ENCODE measurements at regions of chr20 and their contacts with region 1.

Region 1: DNA sequence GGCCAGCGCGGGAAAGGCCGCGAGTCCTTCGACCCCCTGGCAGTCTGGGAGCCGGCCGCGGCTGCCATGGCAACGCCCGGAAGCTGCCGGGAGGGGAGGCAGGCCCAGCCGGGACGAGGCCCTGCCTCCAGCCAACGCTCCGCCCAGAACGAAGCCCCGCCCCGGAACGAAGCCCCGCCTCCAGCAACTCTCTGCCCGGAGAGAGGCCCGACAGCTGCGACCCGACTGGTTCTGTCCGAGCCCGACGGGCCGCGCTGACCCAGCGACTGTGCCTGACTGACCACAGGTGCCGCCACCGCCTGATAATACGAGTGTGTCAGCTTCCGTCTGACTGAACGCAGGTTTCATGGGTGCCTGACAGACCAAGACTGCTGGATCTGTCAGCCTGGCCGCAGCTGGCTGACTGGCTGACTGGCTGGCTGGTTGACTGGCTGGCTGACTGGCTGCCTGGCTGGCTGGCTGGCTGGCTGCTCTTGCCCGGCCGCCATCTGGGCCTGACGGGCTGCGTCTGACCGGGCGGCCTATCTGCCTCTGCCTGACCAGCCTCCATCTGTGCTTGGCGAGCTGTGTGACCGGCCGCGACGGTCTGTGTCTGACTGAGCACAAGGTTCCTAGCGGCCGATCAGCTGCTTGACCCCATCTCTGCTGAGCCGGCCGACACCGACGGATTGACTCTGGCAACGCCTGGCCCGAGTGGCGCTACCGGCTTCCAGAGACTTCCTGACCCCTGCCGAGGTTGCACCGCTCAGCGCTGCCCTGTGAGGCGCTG is 89.7 kb upstream of the EPB41L1 start:
- DNase-seq: peak; percentile 100
- H3K4me3 Mint-ChIP-seq: peak overlapping the region; percentile 95
- H3K27ac Mint-ChIP-seq: peak overlapping the region; percentile 91
- H3K4me1 Mint-ChIP-seq: peaks cover 35% of the 10 kb centered on the region
- H3K27me3 Mint-ChIP-seq: no peaks in the 10 kb centered on the region
- CTCF ChIP-seq: no peak

Region 2: GRCh38 chr20:36074983-36075382 is 10.1 kb after region 1 on chr20:
- CTCF ChIA-PET with region 1: interaction called, 14 read pairs
- intact Hi-C with region 1: no loop called
- DNase-seq: peak; percentile 61
- H3K4me3 Mint-ChIP-seq: no peak overlapping the region
- H3K27ac Mint-ChIP-seq: no peak overlapping the region
- H3K4me1 Mint-ChIP-seq: peaks cover 52% of the 10 kb centered on the region
- H3K27me3 Mint-ChIP-seq: no peaks in the 10 kb centered on the region
- CTCF ChIP-seq: no peak

Region 3: DNA sequence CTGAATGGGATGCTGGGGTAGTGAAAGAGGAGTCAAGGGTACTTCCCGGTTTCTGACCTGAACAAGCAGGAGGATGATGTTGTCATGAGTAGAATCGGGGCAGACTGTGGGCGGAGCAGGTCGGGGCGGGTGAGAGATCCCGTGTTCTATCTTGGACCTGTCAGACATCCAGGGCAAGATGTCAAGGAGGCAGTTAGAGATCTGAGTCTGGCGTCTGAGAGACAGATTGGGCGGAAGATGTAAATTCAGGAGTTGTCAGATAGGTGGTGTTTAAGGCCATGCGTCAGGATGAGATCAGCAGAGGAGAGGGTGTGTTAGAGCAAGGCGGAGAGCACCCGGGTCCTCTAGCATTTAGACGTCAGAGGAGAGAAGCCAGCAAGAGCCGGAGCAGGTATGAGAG is 356.8 kb after region 1 on chr20:
- CTCF ChIA-PET with region 1: no interaction called
- intact Hi-C with region 1: no loop called
- DNase-seq: no peak
- H3K4me3 Mint-ChIP-seq: no peak overlapping the region
- H3K27ac Mint-ChIP-seq: no peak overlapping the region
- H3K4me1 Mint-ChIP-seq: no peaks in the 10 kb centered on the region
- H3K27me3 Mint-ChIP-seq: peaks cover 86% of the 10 kb centered on the region
- CTCF ChIP-seq: no peak